ENCODE measurements at regions of chr2 and their contacts with region 1.

Region 1: GRCh38 chr2:119174216-119175037 is 15.9 kb upstream of the C1QL2 start:
- DNase-seq: peak; percentile 20
- H3K4me3 ChIP-seq: no peak overlapping the region
- H3K27ac ChIP-seq: no peak overlapping the region
- H3K4me1 ChIP-seq: no peaks in the 10 kb centered on the region
- H3K27me3 ChIP-seq: no peaks in the 10 kb centered on the region
- CTCF ChIP-seq: peak; percentile 76 to 84
- POLR2A ChIP-seq: no peak

Region 2: DNA sequence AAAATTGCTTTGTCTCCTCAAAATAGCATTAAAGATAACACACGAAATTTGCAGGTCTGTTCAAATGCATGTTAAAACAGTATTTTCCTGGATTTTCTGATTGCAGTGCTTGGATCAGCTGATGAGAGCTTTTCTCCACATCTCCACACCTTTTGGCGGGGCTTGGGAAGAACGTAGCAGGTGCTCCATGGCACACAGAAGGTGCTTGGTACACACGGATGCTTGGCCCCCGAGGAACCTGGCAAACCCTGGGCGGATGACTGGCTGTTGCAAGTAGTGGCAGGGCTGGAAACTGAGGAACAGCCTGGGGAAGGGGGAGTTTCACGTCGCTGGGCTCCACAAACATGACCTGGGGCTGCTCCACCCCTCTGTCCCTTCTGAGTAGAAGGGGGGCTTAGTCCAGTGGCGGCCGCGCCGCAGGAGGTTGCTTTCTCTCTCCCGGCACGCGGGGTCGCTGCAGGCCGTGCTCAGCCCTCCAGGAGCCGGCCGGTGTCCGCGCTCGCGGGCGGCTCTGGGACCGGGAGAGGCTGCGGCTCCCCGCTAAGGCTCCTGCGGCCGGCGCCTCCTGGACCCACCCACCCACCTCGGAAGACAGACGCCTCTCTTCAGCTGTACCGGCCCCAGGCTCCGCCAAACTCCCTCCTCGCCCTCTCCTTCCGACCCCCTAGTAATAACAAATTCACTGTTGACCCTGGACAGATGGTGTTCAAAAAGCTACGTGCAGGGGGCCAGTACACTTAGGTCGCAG is 163.1 kb before region 1 on chr2:
- CTCF ChIA-PET with region 1: no interaction called
- POLR2A ChIA-PET with region 1: no interaction called
- dilution Hi-C with region 1: no loop called
- intact Hi-C with region 1: loop called (anchors 1 kb)
- DNase-seq: peak; percentile 10
- H3K4me3 ChIP-seq: no peak overlapping the region
- H3K27ac ChIP-seq: no peak overlapping the region
- H3K4me1 ChIP-seq: no peaks in the 10 kb centered on the region
- H3K27me3 ChIP-seq: no peaks in the 10 kb centered on the region
- CTCF ChIP-seq: peak; percentile 31 to 64
- POLR2A ChIP-seq: no peak

Region 3: GRCh38 chr2:119214453-119215037 is 40.1 kb after region 1 on chr2:
- CTCF ChIA-PET with region 1: no interaction called
- POLR2A ChIA-PET with region 1: no interaction called
- dilution Hi-C with region 1: no loop called
- intact Hi-C with region 1: no loop called
- DNase-seq: no peak
- H3K4me3 ChIP-seq: no peak overlapping the region
- H3K27ac ChIP-seq: no peak overlapping the region
- H3K4me1 ChIP-seq: no peaks in the 10 kb centered on the region
- H3K27me3 ChIP-seq: peaks cover 2 to 6% of the 10 kb centered on the region in 2 experiments
- CTCF ChIP-seq: no peak
- POLR2A ChIP-seq: no peak